Panc1 (cell line): ENCODE measurements at regions of chr2 and their contacts with region 1.

Region 1: DNA sequence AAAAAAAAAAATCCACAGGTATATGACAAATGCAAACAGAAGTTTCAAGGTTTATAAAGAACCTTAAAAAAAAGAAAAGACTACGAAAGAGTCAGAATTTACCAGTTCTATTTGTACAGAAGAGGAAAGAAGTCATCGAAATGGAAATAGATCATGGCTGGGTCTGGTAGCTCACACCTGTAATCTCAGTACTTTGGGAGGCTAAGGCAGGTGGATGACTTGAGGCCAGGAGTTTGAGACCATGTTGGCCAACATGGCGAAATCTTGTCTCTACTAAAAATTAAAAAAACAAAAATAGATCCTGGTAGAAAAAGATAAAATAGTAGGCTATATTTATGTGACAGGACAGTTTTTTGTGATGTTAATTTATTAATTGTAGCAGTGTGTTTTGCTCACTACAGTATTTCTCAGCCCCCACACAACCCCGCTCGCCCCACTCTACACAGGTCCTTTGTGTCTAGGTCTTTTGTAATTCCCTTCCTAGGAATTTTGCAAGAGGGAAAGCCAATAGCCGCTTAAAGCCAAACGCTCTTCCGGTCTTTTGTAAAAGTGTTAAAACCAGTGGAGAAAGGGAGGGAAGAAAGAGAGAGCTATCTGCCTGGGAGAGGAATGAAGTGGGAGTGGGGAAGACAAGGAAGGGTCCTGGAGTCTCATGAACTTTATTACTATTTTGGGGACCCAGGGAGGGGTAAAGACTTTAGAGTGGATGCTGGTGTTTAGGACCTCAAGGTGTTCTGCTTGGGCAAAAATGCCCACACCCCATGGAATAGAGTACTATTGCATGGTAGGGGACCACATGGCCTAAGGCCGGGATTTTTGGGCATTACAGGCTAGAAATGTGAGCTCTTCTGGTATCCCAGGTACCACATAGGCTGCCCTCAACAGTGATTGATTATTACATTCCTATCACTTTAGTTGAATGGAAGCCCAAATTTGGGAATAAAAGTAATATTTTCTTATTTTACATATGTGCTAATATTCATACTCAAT is 59.4 kb upstream of the XPO1 start:
- DNase-seq: no peak
- ATAC-seq: no peak
- H3K4me3 ChIP-seq: no peak overlapping the region
- H3K27ac ChIP-seq: no peak overlapping the region
- H3K4me1 ChIP-seq: no peaks in the 10 kb centered on the region
- H3K27me3 ChIP-seq: no peaks in the 10 kb centered on the region
- CTCF ChIP-seq: no peak

Region 2: GRCh38 chr2:61436092-61436491 is 161.5 kb before region 1 on chr2:
- CTCF ChIA-PET with region 1: no interaction called
- POLR2A ChIA-PET with region 1: interaction called, 10 read pairs
- in situ Hi-C with region 1: no loop called
- intact Hi-C with region 1: no loop called
- DNase-seq: no peak
- ATAC-seq: no peak
- H3K4me3 ChIP-seq: no peak overlapping the region
- H3K27ac ChIP-seq: no peak overlapping the region
- H3K4me1 ChIP-seq: peaks cover 22% of the 10 kb centered on the region
- H3K27me3 ChIP-seq: no peaks in the 10 kb centered on the region
- CTCF ChIP-seq: no peak

Region 3: GRCh38 chr2:61620244-61621159 is 22.9 kb after region 1 on chr2:
- CTCF ChIA-PET with region 1: no interaction called
- POLR2A ChIA-PET with region 1: interaction called, 11 read pairs
- in situ Hi-C with region 1: no loop called
- intact Hi-C with region 1: no loop called
- DNase-seq: peak; percentile 50
- ATAC-seq: peak; percentile 81
- H3K4me3 ChIP-seq: no peak overlapping the region
- H3K27ac ChIP-seq: no peak overlapping the region
- H3K4me1 ChIP-seq: no peaks in the 10 kb centered on the region
- H3K27me3 ChIP-seq: no peaks in the 10 kb centered on the region
- CTCF ChIP-seq: no peak

Region 4: DNA sequence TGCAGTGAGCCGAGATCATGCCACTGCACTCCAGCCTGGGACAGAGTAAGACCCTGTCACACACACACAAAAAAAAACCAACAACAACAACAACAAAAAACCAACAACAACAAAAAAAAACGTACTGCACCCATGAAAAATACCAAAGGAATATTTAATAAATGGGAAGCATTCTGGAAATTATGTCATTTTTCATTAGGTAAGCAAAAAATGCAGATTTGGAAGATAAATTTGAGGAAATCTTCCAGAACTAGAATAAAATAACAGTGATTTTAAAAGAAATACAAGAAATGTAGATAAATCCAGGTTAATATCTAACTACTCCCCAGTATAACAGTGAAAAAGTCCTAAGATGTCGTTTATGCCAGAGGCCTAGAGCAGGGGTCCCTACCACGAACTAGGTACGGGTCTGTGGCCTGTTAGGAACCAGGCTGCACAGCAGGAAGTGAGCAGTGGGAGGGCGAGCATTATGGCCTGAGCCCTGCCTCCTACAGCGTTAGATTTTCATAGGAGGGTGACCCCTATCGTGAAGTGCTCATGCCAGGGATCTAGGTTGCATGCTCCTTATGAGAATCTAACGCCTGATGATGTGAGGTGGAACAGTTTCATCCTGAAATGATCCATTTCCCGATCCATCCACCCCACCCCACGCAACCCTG is 234.7 kb after region 1 on chr2:
- CTCF ChIA-PET with region 1: no interaction called
- POLR2A ChIA-PET with region 1: no interaction called
- in situ Hi-C with region 1: no loop called
- intact Hi-C with region 1: no loop called
- DNase-seq: no peak
- ATAC-seq: no peak
- H3K4me3 ChIP-seq: no peak overlapping the region
- H3K27ac ChIP-seq: no peak overlapping the region
- H3K4me1 ChIP-seq: no peaks in the 10 kb centered on the region
- H3K27me3 ChIP-seq: no peaks in the 10 kb centered on the region
- CTCF ChIP-seq: no peak